ENCODE measurements at regions of chr17 and their contacts with region 1.

Region 1: GRCh38 chr17:74212913-74213791 is at the start of gene TTYH2:
- DNase-seq: peak; percentile 90
- ATAC-seq: peak; percentile 87 to 89
- total RNA-seq, gene TTYH2: 15.6 to 23.3 TPM

Region 2: DNA sequence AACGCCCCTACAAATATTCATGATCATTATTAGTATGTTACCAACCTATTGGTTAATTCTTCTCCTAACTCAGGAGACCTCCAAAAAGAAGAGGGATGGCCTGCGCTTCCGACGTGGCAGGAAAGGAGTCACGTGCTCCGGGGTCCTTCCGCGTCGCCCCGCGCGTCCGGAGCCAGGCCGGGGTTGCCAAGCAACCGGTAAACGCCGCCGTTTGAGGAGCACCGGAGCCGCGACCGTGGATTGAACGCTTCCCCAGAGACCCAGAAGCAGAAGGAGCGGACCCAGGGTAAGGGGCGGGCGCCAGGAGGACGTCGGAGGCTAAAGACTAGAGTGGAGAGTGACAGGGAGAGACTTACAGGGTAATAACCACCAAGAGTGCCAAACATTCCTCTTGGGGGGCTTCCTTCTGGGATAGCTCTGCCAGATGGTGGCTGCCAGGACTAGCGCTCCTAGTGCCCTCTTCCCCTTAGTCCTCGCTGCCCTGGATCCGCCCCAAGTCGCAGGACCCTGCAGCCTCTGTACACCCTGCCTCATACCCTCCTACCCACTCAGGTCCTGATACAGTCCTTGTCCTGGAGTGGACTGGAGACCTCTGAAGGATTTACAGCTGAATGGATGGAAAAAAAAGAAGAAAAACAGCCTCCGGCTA is 61.0 kb after region 1 on chr17 and contains the start of gene DNAI2:
- intact Hi-C with region 1: loop called in 1 of 2 experiments (anchors 10 kb)
- DNase-seq: peak; percentile 64
- ATAC-seq: peak in 1 of 2 donors; percentile 11
- total RNA-seq, gene DNAI2: not detected

Region 3: DNA sequence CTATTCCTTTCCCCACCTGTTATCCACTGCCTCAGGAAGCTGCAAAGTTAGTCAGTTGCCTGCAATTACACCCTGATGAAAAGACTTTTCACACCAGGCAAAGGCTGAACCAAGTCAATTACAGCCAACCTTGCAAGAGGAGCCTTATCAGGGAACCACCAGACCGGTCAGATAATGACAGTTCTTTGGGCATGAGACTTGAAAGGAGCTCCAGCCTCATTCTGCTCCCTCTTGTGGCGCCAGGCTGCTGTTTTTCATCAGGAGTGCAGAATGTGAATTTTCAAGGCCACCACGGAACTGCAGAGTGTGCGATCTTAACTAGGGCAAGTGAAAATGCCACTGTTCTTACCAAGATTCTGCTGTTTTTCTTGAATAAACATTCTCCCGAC is 83.4 kb after region 1 on chr17:
- intact Hi-C with region 1: loop called (anchors 1 to 5 kb)
- DNase-seq: peak; percentile 77
- ATAC-seq: peak; percentile 83 to 85

Region 4: DNA sequence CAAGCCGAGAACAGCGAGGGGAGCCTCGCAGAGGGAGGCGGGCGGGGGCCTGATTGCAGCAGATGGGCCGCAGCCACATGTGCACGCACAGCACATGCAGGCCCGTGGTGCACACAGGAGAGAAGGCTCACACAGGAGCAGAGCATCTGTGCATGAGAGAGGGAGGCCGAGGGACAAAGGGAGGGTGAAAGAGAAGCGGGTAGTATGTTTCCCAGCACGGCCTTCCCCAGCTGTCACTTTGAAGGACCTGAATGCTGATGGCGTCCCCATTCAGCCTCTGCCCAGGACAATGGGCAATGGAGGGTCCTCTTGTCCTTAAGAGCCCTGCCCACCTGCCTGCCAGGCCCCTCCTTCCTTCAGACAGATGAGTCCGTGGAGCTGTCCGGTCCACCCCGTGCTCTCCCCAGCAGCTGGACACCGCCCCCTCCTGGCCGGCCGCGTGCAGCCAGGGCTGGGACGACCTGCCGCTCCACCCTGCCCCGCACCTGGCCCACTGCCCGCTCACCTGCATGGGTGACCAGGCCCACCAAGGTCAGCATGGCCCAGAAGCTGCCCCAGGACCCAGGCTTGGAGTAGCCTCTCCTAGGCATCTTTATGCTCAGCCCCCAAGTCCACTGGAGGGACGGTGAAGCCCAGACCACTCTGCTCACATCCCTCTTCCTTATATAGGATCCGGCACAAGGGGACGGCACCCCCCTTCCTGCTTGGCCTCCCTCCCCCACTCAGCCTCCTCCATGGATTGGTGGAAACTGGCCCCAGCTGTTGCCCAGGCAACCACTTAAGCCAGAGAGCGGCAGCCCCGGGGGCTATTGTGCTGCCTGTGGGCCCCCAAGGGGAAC is 148.3 kb after region 1 on chr17 and contains the start of gene BTBD17:
- intact Hi-C with region 1: loop called (anchors 2 to 5 kb)
- DNase-seq: peak; percentile 66
- ATAC-seq: peak; percentile 78 to 88
- total RNA-seq, gene BTBD17: not detected

Measured in left cardiac atrium (tissue), 4 donors.